ENCODE measurements at regions of chrX and their contacts with region 1.

Region 1: DNA sequence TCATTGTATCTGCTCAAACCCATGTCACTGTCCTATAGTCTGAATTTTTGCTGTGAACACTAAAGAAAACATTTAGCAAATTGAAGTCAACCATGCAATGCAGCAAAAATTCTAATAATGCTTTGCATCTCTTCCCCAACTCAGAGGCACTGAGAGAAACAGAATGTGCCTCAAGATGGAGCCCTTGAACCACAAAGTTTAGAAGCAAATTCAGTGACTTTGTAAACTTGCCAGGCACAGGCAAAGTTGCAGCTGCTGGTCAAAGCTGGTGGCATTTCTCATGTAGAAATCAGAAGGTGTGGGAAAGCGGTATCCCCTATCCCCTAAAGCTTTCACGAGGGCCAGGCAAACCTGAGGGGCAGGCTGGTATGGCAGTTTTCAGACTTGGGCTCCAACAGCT is 121.7 kb upstream of the DIPK2B start:
- DNase-seq: no peak
- H3K4me3 ChIP-seq: no peak overlapping the region
- H3K27ac ChIP-seq: no peak overlapping the region
- H3K4me1 ChIP-seq: peaks cover 0 to 7% (median 6%) of the 10 kb centered on the region in 4 donors
- H3K27me3 ChIP-seq: no peaks in the 10 kb centered on the region
- CTCF ChIP-seq: peak; percentile 44 to 58 (median 54)
- EP300 ChIP-seq: no peak
- POLR2A ChIP-seq: no peak

Region 2: DNA sequence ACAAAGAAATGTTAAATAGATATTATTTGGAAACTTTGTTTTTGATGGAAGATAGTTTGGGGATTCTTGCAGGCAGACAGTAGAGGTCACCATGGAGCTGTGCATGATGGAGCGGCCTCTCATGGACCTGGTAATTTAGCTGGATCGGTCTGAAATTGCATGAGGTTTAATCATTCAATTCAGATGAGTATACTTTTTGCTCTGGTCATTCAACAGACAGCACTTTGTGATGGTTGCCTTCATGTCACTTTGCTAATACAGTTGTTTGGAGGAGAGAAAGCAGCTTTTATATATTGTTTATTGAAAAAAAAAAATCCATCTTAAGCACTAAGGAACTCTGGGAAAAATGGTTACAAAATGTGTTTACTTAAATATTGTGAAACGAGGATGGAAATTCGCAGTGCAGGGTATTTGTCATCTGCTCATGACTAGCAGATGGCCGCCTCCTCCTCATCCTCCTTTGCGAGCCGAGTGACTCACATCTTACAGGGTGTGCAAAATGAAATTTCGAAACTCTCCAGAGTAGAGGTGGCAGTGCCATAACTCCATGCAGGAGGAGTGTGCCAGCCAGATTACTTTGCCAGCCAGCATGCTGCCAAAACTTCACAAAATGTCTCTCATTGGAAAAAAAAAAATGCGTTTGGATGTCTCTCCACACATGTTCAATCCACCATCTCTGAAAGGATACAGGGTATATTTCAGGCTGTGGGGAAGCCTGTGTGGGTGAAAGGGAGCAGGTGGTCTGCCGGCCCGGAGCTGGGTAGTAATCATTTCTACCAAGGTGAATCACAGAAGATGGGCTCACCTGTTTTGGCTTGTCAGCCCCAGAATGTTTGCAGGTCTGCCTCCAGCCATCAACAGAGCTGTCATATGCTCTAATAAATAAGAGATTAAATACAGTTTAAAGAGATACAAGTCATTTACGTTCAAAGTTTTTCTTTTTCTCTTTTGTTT is 193.2 kb after region 1 on chrX:
- intact Hi-C with region 1: loop called (anchors 5 kb)
- DNase-seq: no peak
- H3K4me3 ChIP-seq: no peak overlapping the region
- H3K27ac ChIP-seq: peak overlapping the region; percentile 45 to 64 (median 64)
- H3K4me1 ChIP-seq: peaks cover 4 to 45% (median 33%) of the 10 kb centered on the region in 4 donors
- H3K27me3 ChIP-seq: peaks cover 0 to 2% (median 0%) of the 10 kb centered on the region in 4 donors
- CTCF ChIP-seq: peak; percentile 44 to 50 (median 47)
- EP300 ChIP-seq: no peak
- POLR2A ChIP-seq: no peak

Region 3: DNA sequence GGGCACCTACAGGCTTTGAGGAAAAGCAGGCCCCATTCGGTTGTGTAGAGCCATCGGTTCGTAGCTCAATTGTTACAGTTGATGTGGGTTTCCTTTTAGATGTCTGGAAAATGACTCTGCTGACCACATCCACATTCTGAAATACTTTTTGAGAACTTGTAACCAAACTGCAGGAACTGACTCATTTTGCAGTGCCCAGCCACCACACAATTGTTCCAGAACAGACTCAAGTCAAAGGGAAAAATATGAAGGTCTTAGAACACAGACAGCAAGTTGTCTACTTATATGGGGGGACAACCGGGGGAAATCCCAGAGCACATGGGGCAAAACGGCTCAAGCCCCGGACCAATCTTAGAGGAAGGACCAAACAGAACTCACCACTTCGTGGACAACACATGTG is 435.9 kb after region 1 on chrX:
- intact Hi-C with region 1: loop called (anchors 2 kb)
- DNase-seq: no peak
- H3K4me3 ChIP-seq: no peak overlapping the region
- H3K27ac ChIP-seq: peak overlapping the region in 1 of 4 donors; percentile 5
- H3K4me1 ChIP-seq: no peaks in the 10 kb centered on the region
- H3K27me3 ChIP-seq: no peaks in the 10 kb centered on the region
- CTCF ChIP-seq: no peak
- EP300 ChIP-seq: no peak
- POLR2A ChIP-seq: no peak

Region 4: DNA sequence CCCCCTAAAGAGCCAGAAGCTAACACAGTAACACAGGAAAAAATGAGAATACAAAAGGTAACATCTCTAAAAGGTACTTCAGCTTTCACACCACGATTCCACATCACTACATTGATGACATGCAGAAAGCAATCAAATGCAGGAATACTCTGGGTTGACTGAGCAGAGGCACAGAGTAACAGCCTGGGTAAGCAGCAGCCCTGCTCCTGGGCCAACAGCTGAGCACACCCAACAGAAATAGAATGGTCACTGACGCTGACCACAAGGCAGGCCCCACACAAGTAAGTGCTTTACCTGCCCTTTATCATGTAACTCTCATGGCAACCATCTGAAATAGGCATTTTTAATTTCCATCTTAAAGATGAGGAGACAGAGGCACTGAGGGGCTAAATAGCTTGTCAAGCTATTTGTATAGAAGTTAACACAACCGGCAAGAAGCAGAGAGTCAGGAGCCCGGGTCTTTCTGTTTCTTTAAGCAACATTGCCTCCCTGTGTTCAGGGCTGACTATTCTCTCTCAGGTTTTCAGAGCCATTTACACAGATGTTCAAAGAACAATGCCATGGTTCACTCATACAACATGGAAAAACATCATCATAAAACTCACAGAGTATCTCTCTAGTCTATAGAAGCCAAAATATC is 1054.0 kb after region 1 on chrX:
- intact Hi-C with region 1: loop called (anchors 10 kb)
- DNase-seq: no peak
- H3K4me3 ChIP-seq: no peak overlapping the region
- H3K27ac ChIP-seq: no peak overlapping the region
- H3K4me1 ChIP-seq: no peaks in the 10 kb centered on the region
- H3K27me3 ChIP-seq: no peaks in the 10 kb centered on the region
- CTCF ChIP-seq: peak; percentile 21 to 38 (median 37)
- EP300 ChIP-seq: no peak
- POLR2A ChIP-seq: no peak

Region 5: DNA sequence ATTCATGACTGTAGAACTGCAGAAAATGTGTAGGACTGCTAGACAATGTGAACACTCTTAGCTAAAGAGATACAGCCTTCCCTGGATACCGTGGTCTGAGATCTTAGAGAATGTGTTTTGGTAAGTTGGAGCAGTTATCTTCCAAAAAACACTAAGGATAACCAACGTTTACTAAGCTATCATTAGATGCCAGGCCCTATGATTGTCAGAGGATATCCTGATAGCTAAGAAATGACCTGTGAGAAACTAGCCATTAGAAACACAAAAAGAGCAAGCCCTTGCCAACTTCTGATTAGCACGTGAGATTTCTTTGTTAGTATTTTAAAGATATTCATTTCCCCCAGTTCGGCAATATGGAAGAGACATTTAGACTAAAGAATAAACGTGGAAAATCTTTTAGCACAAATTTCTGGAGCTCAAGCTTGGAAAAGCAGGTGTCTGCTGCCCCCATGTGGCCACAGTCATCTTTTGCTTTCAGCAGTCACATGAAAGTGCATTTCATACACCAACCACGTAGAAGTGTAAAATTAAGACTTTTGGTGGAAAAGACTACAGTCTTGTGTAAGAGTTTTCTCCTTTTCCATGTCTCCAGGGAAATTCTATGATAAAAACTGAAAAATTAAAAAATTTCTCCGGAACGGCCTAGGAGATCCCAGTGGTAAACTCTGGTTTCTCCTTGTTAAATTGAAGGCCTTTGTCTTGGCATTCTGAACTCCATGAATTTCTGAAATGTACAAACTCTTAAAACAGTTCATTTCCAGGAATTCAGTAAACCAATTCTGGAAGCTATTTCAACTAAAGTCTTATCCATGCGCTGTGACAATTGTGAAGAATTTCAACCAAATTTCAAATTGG is 1086.4 kb after region 1 on chrX:
- intact Hi-C with region 1: loop called (anchors 10 kb)
- DNase-seq: no peak
- H3K4me3 ChIP-seq: no peak overlapping the region
- H3K27ac ChIP-seq: no peak overlapping the region
- H3K4me1 ChIP-seq: no peaks in the 10 kb centered on the region
- H3K27me3 ChIP-seq: no peaks in the 10 kb centered on the region
- CTCF ChIP-seq: peak; percentile 68 to 78 (median 75)
- EP300 ChIP-seq: no peak
- POLR2A ChIP-seq: no peak